Thyroid gland (tissue), 4 donors: ENCODE measurements at regions of chr2 and their contacts with region 1.

Region 1: GRCh38 chr2:2112416-2113105 is 218.5 kb downstream of the MYT1L start:
- DNase-seq: no peak
- H3K4me3 ChIP-seq: no peak overlapping the region
- H3K27ac ChIP-seq: no peak overlapping the region
- H3K4me1 ChIP-seq: peaks cover under 1 to 6% of the 10 kb centered on the region in 2 donors
- H3K27me3 ChIP-seq: no peaks in the 10 kb centered on the region
- CTCF ChIP-seq: no peak
- POLR2A ChIP-seq: no peak

Region 2: DNA sequence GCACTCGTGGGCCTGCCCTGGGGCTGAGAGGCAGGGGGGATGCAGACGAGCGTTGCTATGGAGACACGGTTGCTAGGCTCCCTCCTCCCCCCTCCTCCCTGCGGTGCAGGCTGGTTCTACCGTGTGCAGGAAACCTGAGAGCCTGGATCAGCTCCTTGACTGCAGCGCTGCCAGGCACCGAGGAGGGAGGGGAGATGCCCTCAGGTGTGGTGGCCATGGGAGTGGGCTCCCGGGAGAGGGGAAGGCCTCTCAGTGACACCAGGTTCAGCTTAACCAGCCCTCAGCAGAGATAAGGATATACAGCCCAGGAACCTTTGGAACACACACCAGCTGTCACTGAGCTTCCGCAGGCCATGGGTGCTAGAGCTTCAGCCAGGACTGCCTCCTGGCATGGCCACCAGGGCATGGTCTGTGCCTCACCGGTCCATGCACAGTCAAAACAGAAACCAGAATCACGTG is 243.8 kb before region 1 on chr2:
- intact Hi-C with region 1: loop called (anchors 10 kb)
- DNase-seq: no peak
- H3K4me3 ChIP-seq: no peak overlapping the region
- H3K27ac ChIP-seq: no peak overlapping the region
- H3K4me1 ChIP-seq: peaks cover 35 to 42% of the 10 kb centered on the region in 2 donors
- H3K27me3 ChIP-seq: no peaks in the 10 kb centered on the region
- CTCF ChIP-seq: no peak
- POLR2A ChIP-seq: no peak

Region 3: DNA sequence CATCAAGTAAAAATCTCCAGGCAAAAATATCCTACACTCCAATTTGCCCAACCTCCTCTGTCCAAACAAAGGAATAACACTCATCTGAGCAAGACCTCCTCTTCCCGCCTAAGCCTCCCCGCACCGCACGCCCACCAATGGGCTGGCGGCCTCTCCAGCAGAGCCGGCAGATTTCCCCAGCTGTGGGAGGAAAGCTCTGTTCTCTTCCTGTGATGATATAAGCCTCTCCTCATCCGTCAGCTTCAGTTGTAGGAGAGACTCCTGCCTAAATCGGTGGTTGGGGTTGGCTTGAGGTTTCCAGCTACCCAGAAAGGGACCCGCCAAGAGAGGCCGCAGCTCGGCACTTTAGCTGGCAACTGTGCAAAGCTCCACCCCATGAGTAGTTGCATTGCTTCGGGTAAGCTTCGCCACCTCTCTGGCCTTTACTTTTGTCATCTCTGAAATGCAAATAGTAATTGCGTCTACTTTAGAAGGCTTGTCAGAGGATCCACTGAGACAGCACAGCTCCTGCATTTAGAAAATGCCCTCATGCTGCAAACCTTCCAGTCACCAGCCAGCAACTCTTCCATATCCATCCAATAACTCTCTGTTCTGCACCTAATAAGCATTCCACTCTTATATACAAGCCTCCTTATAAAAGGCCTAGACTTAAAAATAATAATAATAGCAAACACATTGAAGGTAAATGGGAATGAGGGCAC is 72.1 kb after region 1 on chr2:
- intact Hi-C with region 1: no loop called
- DNase-seq: no peak
- H3K4me3 ChIP-seq: no peak overlapping the region
- H3K27ac ChIP-seq: no peak overlapping the region
- H3K4me1 ChIP-seq: peaks cover 0 to 7% of the 10 kb centered on the region in 2 donors
- H3K27me3 ChIP-seq: no peaks in the 10 kb centered on the region
- CTCF ChIP-seq: no peak
- POLR2A ChIP-seq: no peak